Activated CD4-positive, alpha-beta memory T cell treated with anti-CD3 and anti-CD28 coated beads for 36 hours (primary cell): ENCODE measurements at regions of chr12 and their contacts with region 1.

Region 1: GRCh38 chr12:64696080-64696741 is 63.0 kb downstream of the GNS start:
- DNase-seq: no peak
- H3K4me3 Mint-ChIP-seq: no peak overlapping the region
- H3K27ac Mint-ChIP-seq: peak overlapping the region; percentile 30
- H3K4me1 Mint-ChIP-seq: peaks cover 63% of the 10 kb centered on the region
- H3K27me3 Mint-ChIP-seq: no peaks in the 10 kb centered on the region

Region 2: GRCh38 chr12:64451687-64452558 is 244.3 kb before region 1 on chr12 and contains the start of gene TBK1:
- CTCF ChIA-PET with region 1: interaction called, 3 read pairs
- POLR2A ChIA-PET with region 1: no interaction called
- intact Hi-C with region 1: loop called (anchors 2 kb)
- DNase-seq: peak; percentile 77
- H3K4me3 Mint-ChIP-seq: peak within 1 kb of the TSS; percentile 96
- H3K27ac Mint-ChIP-seq: peak within 1 kb of the TSS; percentile 95
- H3K4me1 Mint-ChIP-seq: peaks cover 42% of the 10 kb centered on the region
- H3K27me3 Mint-ChIP-seq: no peaks in the 10 kb centered on the region
- total RNA-seq, gene TBK1: 21.7 to 23.4 TPM

Region 3: DNA sequence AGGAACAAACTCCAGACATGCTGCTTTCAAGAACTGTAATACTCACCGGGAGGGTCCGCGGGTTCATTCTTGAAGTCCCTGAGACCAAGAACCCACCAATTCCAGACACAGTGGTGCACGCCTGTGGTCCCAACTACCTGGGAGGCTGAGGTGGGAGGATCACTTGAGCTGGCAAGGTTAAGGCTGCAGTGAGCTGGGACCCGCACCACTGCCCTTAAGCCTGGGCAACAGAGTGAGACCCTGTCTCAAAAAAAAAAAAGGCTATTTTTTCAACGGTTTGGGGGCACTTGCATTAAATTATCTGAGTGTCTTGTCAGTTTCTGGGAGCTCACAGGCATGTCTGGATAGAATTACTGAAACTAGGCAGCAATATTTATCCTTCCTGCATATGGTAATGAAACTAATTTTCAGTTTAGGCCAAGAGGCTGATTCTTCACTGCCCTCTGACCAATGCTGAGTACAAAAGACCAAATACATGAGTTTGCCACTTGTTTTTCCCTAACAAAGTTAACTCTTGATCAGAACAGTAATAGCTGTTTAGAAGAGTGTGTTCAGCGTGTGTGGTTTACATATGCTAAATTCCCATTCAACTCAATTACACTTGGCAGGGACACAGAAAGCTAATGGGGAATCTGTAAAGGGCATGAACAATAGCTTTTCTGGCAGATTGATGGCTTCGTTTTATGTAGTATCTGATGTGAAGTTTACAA is 151.7 kb before region 1 on chr12:
- CTCF ChIA-PET with region 1: interaction called, 161 read pairs
- POLR2A ChIA-PET with region 1: interaction called, 5 read pairs
- intact Hi-C with region 1: loop called (anchors 1 kb)
- DNase-seq: no peak
- H3K4me3 Mint-ChIP-seq: no peak overlapping the region
- H3K27ac Mint-ChIP-seq: no peak overlapping the region
- H3K4me1 Mint-ChIP-seq: peaks cover 3% of the 10 kb centered on the region
- H3K27me3 Mint-ChIP-seq: peaks cover 11% of the 10 kb centered on the region

Region 4: GRCh38 chr12:64660237-64661018 is 35.8 kb before region 1 on chr12:
- CTCF ChIA-PET with region 1: interaction called, 6 read pairs
- POLR2A ChIA-PET with region 1: no interaction called
- intact Hi-C with region 1: loop called (anchors 5 kb)
- DNase-seq: no peak
- H3K4me3 Mint-ChIP-seq: no peak overlapping the region
- H3K27ac Mint-ChIP-seq: peak overlapping the region; percentile 73
- H3K4me1 Mint-ChIP-seq: peaks cover 85% of the 10 kb centered on the region
- H3K27me3 Mint-ChIP-seq: no peaks in the 10 kb centered on the region

Region 5: DNA sequence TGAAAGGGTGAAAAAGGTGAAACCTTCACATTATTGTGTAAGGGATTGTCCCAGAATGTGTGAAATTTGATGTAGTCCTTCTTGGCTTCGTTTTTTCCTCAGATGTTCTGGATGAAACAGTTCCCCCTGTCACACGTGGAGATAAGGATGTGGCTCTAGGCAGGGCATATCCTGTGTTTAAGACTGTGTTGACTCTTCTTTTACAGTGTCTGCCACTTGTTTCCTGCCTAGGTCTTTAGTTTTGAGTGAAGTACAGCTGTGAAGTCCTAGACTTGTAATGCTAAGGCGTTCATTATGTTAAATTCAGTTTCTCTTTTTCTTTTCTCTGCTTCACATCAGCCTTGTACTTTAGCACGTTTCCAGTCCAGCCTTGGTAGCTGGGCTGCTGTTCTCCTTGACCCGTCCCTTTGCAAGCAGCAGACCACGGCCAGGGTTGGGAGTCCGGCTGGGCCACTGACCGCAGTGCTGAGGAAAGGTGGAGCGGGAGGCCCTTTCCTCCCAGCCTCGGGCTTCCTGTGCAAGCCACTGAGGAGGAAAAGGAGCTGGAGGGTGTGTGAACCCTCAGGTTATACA is 26.9 kb before region 1 on chr12:
- CTCF ChIA-PET with region 1: interaction called, 10 read pairs
- POLR2A ChIA-PET with region 1: no interaction called
- intact Hi-C with region 1: loop called (anchors 5 kb)
- DNase-seq: peak; percentile 50
- H3K4me3 Mint-ChIP-seq: peak overlapping the region; percentile 85
- H3K27ac Mint-ChIP-seq: peak overlapping the region; percentile 96
- H3K4me1 Mint-ChIP-seq: peaks cover 91% of the 10 kb centered on the region
- H3K27me3 Mint-ChIP-seq: no peaks in the 10 kb centered on the region

Region 6: GRCh38 chr12:64679487-64679983 is 16.7 kb before region 1 on chr12:
- CTCF ChIA-PET with region 1: interaction called, 72 read pairs
- POLR2A ChIA-PET with region 1: interaction called, 3 read pairs
- intact Hi-C with region 1: no loop called
- DNase-seq: peak; percentile 78
- H3K4me3 Mint-ChIP-seq: peak overlapping the region; percentile 62
- H3K27ac Mint-ChIP-seq: peak overlapping the region; percentile 91
- H3K4me1 Mint-ChIP-seq: peaks cover 91% of the 10 kb centered on the region
- H3K27me3 Mint-ChIP-seq: no peaks in the 10 kb centered on the region

Region 7: GRCh38 chr12:64706306-64706705 is 10.1 kb after region 1 on chr12:
- CTCF ChIA-PET with region 1: interaction called, 28 read pairs
- POLR2A ChIA-PET with region 1: no interaction called
- intact Hi-C with region 1: no loop called
- DNase-seq: no peak
- H3K4me3 Mint-ChIP-seq: no peak overlapping the region
- H3K27ac Mint-ChIP-seq: no peak overlapping the region
- H3K4me1 Mint-ChIP-seq: peaks cover 6% of the 10 kb centered on the region
- H3K27me3 Mint-ChIP-seq: no peaks in the 10 kb centered on the region

Region 8: DNA sequence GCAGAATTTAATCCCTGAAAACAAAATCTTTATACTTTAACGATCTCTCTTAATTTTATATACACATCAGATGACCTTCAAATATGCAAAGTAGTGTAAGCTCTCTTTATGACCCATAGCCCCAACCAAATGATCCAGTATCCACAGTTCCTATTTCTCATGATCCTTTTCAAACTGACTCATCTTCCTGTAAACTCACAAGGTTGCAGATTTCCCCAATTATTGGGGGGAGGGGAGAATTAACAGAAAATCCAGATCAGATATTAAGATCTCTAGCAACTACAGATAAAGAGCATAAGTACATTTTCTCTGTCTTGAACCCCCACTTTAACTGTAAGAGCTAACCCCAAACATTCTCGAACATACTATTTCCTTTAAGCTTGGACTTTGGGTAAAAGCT is 50.5 kb after region 1 on chr12:
- CTCF ChIA-PET with region 1: no interaction called
- POLR2A ChIA-PET with region 1: no interaction called
- intact Hi-C with region 1: no loop called
- DNase-seq: no peak
- H3K4me3 Mint-ChIP-seq: no peak overlapping the region
- H3K27ac Mint-ChIP-seq: no peak overlapping the region
- H3K4me1 Mint-ChIP-seq: peaks cover 12% of the 10 kb centered on the region
- H3K27me3 Mint-ChIP-seq: no peaks in the 10 kb centered on the region